ENCODE measurements at regions of chr6 and their contacts with region 1.

Region 1: DNA sequence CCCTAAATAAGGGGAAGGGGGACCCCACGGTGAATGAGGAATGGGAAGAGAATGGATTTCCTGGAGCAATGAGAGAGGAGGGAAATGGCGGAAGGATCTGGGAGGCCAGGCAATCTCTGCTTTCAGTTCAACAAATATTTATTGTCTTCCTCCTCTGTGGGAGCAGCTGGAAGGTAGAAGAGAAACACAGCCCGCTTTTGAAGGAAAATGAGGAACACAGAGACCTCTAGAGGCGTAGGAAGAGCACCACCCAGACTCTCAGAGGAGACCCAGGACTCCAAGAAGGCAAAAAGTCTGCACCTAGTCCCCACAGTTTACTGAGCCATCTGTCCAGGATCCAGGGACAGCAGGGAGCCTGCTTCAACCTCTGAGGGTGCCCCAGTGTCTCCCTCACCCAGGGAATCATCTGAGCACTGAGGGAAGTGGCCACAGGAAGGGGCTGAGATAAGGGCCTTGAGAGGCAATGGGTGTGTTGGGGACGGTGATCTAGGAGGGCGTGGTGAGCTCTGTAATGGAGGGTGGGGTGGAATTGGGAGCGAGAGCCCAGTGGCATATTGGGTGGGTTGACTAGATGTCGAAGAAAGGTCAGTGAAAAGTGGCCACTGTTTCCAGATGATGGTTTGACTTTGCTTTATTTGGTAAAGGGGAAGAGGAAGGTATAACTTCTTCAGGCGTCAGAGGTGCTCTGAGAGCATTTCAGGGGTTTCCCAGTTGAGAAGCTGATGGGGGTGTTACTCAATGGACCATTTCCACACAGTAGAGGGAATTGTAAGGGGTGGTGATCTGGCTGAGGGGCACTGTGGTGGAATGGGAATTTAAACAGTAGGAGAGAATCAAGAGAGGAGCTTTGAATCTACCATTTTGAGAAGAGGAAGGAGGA is 610 bp downstream of the PSORS1C1 start:
- DNase-seq: peak; percentile 72
- ATAC-seq: peak; percentile 67
- H3K4me3 ChIP-seq: peak overlapping the region; percentile 62
- H3K27ac ChIP-seq: peak overlapping the region; percentile 90
- H3K4me1 ChIP-seq: peaks cover 36% of the 10 kb centered on the region
- H3K27me3 ChIP-seq: no peaks in the 10 kb centered on the region
- CTCF ChIP-seq: peak; percentile 64

Region 2: GRCh38 chr6:31094389-31094881 is 20.8 kb before region 1 on chr6:
- CTCF ChIA-PET with region 1: no interaction called
- POLR2A ChIA-PET with region 1: no interaction called
- intact Hi-C with region 1: loop called (anchors 1 kb)
- DNase-seq: peak; percentile 83
- ATAC-seq: peak; percentile 91
- H3K4me3 ChIP-seq: no peak overlapping the region
- H3K27ac ChIP-seq: peak overlapping the region; percentile 72
- H3K4me1 ChIP-seq: peaks cover 21% of the 10 kb centered on the region
- H3K27me3 ChIP-seq: no peaks in the 10 kb centered on the region
- CTCF ChIP-seq: no peak

Measured in PC-3 (cell line).